ENCODE measurements at regions of chr4 and their contacts with region 1.

Region 1: DNA sequence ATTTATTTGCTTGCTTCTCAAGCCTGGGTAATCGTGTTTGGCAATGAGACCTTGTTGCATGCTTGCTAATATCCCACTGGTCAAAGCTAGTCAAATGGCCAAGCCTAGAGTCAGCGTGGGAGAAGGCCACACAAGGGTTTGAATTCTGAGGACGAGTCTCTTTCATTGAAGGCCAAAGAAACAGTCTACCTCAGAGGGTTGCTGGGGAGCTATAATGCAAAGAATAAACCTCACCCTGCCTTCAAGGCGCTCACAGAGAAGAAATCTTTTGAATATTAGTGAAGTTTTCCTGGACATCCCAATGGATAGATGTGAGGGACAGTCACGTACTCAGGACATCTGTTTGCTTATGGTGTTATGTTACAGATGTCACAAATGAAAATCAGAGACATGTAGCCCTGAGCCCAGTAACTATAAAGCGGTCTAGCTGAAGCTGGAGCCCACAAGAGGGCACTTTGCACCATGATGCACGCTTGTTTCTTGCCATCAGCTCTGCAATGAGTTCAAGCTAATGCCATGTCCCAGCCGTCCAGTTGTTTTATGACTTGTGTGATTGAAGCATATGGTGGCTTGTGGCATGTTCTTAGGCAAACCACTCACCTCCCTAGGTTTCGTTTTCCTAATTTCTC is 1.1 kb upstream of the TLR3 start:
- DNase-seq: peak; percentile 35
- ATAC-seq: no peak
- H3K4me3 ChIP-seq: peak overlapping the region in 1 of 5 experiments; percentile 55
- H3K4me3 Mint-ChIP-seq: no peak overlapping the region
- H3K27ac ChIP-seq: no peak overlapping the region
- H3K27ac Mint-ChIP-seq: no peak overlapping the region
- H3K4me1 ChIP-seq: peaks cover 13 to 20% of the 10 kb centered on the region in 2 donors
- H3K4me1 Mint-ChIP-seq: peaks cover 8% of the 10 kb centered on the region
- H3K27me3 ChIP-seq: peaks cover 0 to 41% (median 21%) of the 10 kb centered on the region in 4 experiments
- H3K27me3 Mint-ChIP-seq: peaks cover 42% of the 10 kb centered on the region
- CTCF ChIP-seq: no peak

Region 2: GRCh38 chr4:186191200-186192065 is 123.6 kb after region 1 on chr4 and contains the start of gene CYP4V2:
- CTCF ChIA-PET with region 1: interaction called, 3 read pairs
- POLR2A ChIA-PET with region 1: interaction called, 4 read pairs
- intact Hi-C with region 1: loop called (anchors 10 kb)
- DNase-seq: peak; percentile 91
- ATAC-seq: peak; percentile 84
- H3K4me3 ChIP-seq: peak within 1 kb of the TSS; percentile 66 to 95 (median 90)
- H3K4me3 Mint-ChIP-seq: peak within 1 kb of the TSS; percentile 94
- H3K27ac ChIP-seq: peak within 1 kb of the TSS; percentile 89 to 91
- H3K27ac Mint-ChIP-seq: peak within 1 kb of the TSS; percentile 96
- H3K4me1 ChIP-seq: peaks cover 17 to 21% of the 10 kb centered on the region in 2 donors
- H3K4me1 Mint-ChIP-seq: peaks cover 27% of the 10 kb centered on the region
- H3K27me3 ChIP-seq: no peaks in the 10 kb centered on the region
- H3K27me3 Mint-ChIP-seq: no peaks in the 10 kb centered on the region
- CTCF ChIP-seq: peak; percentile 51
- total RNA-seq, gene CYP4V2: 18.3 and 19.7 TPM in 2 replicates

Region 3: GRCh38 chr4:186587416-186588018 is 519.6 kb after region 1 on chr4:
- CTCF ChIA-PET with region 1: interaction called, 15 read pairs
- POLR2A ChIA-PET with region 1: no interaction called
- intact Hi-C with region 1: no loop called
- DNase-seq: peak; percentile 44
- ATAC-seq: no peak
- H3K4me3 ChIP-seq: no peak overlapping the region
- H3K4me3 Mint-ChIP-seq: no peak overlapping the region
- H3K27ac ChIP-seq: no peak overlapping the region
- H3K27ac Mint-ChIP-seq: no peak overlapping the region
- H3K4me1 ChIP-seq: no peaks in the 10 kb centered on the region
- H3K4me1 Mint-ChIP-seq: no peaks in the 10 kb centered on the region
- H3K27me3 ChIP-seq: no peaks in the 10 kb centered on the region
- H3K27me3 Mint-ChIP-seq: no peaks in the 10 kb centered on the region
- CTCF ChIP-seq: peak; percentile 96

Measured in B cell (primary cell).